Cardiac septum (tissue), 1 donor: ENCODE measurements at regions of chr16 and their contacts with region 1.

Region 1: GRCh38 chr16:27972500-27972899 is 91.0 kb downstream of the GSG1L start:
- DNase-seq: peak; percentile 15

Region 2: GRCh38 chr16:27639561-27640276 is 332.8 kb before region 1 on chr16:
- intact Hi-C with region 1: loop called (anchors 10 kb)
- DNase-seq: no peak

Region 3: DNA sequence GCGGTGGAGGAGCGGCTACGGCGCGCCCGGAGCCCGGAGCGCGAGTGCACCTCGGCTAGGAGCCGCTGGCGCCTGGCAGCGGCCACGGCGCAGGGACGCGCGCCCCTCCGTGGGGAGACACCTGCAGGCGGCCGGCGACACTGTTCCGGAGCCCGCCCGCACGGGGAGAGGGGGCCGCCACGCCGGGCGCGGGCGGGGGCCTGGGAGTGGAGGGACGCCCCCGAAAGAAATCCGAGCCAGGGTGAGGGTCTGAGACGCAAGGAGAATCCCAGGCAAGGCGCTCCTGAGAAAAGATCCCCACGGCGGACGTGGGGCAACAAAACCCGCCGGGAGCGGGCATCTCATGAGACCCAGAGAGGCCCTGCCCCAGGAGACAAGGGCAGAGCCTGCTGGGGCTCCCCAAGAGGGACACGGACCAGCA is 91.2 kb after region 1 on chr16 and contains the start of gene GSG1L:
- intact Hi-C with region 1: loop called (anchors 2 kb)
- DNase-seq: no peak
- total RNA-seq, gene GSG1L: 8.0 TPM

Region 4: GRCh38 chr16:28069971-28070794 is 97.7 kb after region 1 on chr16:
- intact Hi-C with region 1: loop called (anchors 2 kb)
- DNase-seq: no peak